ENCODE measurements at regions of chr3 and their contacts with region 1.

Region 1: DNA sequence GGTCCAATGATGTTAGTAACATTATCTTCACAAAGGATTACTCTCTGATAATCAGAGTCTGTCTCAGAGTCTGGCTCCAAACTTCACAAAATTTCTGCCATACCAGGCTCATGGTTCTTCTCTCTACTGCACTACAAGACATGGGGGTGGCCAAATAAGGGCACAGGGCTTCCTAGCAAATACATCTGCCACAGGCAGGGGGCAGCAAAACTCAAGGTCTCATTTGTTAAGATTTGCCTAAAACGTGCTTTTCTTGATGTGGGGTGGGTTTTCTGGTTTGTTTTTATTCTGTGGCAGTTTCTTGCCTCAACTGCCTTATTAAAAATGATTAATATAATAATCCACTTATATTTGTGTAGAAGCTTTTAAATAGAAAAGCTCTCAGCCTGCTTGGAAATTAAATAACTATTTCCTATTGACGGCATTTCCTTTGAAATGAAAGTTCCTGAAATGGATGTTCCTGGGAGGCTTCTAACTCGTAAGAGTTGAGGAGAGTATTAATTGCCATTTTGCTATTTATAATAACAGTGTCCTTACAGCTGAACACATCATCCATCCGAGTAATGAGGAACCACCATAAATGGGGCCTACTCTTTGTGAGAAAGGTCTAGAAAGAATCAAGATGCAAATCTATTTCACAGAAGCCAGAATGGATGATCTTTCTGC is 53.8 kb downstream of the SST start:
- DNase-seq: peak; percentile 16 to 53 (median 20)
- H3K4me3 ChIP-seq: no peak overlapping the region
- H3K4me3 Mint-ChIP-seq: no peak overlapping the region
- H3K27ac ChIP-seq: no peak overlapping the region
- H3K27ac Mint-ChIP-seq: no peak overlapping the region
- H3K4me1 ChIP-seq: no peaks in the 10 kb centered on the region
- H3K4me1 Mint-ChIP-seq: peaks cover 5 to 13% (median 6%) of the 10 kb centered on the region in 3 donors
- H3K27me3 ChIP-seq: no peaks in the 10 kb centered on the region
- H3K27me3 Mint-ChIP-seq: peaks cover 0 to 18% of the 10 kb centered on the region in 2 donors

Region 2: DNA sequence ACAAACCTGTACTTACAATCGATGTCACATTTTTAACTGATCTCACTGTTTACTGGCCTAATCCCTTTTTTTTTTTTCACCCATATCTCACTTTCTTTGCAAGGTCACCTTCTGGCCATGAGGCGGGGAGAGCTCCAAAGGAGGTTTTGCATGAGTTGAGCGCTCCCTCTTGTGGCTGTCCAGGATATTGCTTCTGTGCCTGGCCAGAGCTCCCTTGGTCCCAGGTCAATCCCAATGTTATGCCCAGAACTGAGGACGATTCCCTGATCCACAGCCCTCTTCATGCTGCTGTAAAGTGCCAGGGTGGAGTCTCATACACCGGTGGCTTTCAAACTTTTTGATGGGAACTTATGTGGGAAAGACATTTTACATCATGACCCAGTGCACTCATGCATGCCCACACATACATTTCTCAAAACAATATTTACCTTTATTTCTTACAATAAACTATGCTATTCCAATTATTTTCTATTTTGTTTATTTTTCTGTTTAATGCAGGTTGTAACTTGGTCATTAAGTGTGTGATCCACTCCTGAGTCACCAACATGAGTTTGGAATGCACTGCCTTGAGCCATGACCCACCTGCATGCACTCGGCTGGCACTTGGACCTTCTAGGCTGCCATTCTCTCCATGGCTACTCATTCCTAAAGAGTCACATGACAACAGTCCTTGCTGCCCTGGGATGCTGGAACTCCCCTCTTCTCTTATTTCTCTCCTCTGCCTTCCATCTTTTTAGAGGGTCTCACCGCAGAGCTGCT is 63.4 kb after region 1 on chr3:
- CTCF ChIA-PET with region 1: interaction called, 11 read pairs
- POLR2A ChIA-PET with region 1: no interaction called
- DNase-seq: peak; percentile 30 to 70 (median 50)
- H3K4me3 ChIP-seq: no peak overlapping the region
- H3K4me3 Mint-ChIP-seq: no peak overlapping the region
- H3K27ac ChIP-seq: no peak overlapping the region
- H3K27ac Mint-ChIP-seq: peak overlapping the region in 2 of 8 donors; percentile 23 to 46
- H3K4me1 ChIP-seq: no peaks in the 10 kb centered on the region
- H3K4me1 Mint-ChIP-seq: peaks cover 0 to 4% (median 2%) of the 10 kb centered on the region in 3 donors
- H3K27me3 ChIP-seq: no peaks in the 10 kb centered on the region
- H3K27me3 Mint-ChIP-seq: peaks cover 13 to 58% of the 10 kb centered on the region in 2 donors

Measured in CD8-positive, alpha-beta memory T cell (primary cell).